Calu3 (cell line): ENCODE measurements at regions of chr9 and their contacts with region 1.

Region 1: GRCh38 chr9:71108937-71109336 is 12.5 kb downstream of the TRPM3 start:
- DNase-seq: no peak
- H3K4me3 Mint-ChIP-seq: no peak overlapping the region
- H3K27ac Mint-ChIP-seq: no peak overlapping the region
- H3K4me1 Mint-ChIP-seq: no peaks in the 10 kb centered on the region
- H3K27me3 Mint-ChIP-seq: peaks cover 67% of the 10 kb centered on the region
- CTCF ChIP-seq: no peak

Region 2: DNA sequence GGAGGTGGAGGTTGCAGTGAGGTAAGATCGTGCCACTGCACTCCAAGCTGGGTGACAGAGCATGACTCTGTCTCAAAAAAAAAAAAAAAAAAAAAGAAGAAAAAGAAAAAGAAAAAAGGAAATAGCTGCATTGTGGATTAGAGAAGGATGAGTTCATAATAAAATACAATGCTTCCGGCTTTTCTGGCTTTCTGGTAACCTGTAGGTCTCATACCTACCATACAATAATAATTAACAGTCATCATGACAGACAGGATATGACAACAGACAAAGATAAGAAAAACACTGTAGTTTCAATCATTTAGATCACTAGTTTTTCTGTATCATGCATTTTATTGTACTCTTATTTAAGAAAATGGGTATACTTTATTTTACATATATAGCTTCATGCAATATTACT is 53.2 kb after region 1 on chr9:
- CTCF ChIA-PET with region 1: no interaction called
- intact Hi-C with region 1: loop called (anchors 10 kb)
- DNase-seq: no peak
- H3K4me3 Mint-ChIP-seq: no peak overlapping the region
- H3K27ac Mint-ChIP-seq: no peak overlapping the region
- H3K4me1 Mint-ChIP-seq: no peaks in the 10 kb centered on the region
- H3K27me3 Mint-ChIP-seq: peaks cover 30% of the 10 kb centered on the region
- CTCF ChIP-seq: no peak

Region 3: DNA sequence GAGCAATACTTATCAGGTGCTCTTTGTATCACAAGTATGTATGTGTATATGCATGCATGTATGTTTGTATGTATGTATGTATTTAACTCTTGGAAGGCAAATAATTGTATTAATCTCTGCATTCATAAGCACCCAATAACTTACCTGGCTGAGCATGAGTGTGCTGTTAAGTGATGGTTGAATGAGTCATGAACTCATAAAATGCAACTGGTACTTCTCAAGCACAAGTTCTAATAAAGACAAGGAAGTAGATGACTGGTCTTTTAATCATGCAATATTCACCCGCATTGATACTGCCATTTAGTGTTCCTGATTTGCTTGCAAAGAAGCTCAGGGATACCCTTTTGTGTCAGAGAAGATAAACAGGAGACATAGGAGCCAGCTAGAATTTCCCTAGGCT is 217.4 kb after region 1 on chr9:
- CTCF ChIA-PET with region 1: no interaction called
- intact Hi-C with region 1: no loop called
- DNase-seq: no peak
- H3K4me3 Mint-ChIP-seq: no peak overlapping the region
- H3K27ac Mint-ChIP-seq: no peak overlapping the region
- H3K4me1 Mint-ChIP-seq: no peaks in the 10 kb centered on the region
- H3K27me3 Mint-ChIP-seq: peaks cover 54% of the 10 kb centered on the region
- CTCF ChIP-seq: no peak